ENCODE measurements at regions of chr4 and their contacts with region 1.

Region 1: DNA sequence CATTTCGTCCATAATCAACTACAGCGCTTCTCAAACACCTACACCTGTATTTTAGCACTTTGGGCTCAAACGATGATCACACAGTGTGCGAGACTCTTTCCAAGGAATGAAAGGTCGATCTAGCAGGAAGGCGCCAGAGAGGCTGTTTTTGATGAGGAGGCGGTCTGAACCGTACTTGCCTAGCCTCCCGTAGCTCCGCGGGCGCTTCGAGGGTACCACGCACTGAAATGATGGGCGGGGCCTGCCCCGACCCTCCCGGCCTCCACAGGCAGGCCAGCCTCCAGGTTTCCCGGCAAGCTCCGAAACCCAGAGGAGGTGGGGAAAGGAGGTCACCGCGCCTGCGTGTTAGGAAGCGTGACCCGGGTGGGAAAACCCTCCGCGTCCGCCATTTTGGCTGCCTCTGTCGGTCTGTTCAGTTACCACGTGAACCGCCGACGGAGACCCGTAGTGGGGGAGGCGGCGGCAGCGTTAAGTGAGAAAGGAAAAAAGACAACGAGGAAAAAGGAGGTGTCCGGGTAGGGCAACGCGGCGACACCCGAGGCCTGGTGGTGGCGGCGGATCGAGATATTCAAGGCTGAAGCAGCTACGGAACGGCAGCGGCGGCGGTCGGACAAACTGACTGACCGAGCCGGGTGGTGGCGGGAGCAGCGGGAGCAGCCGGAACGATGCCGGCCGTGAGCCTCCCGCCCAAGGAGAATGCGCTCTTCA is at the start of gene NAA15:
- DNase-seq: peak; percentile 97 to 99 (median 97)
- H3K4me3 ChIP-seq: peak within 1 kb of the TSS; percentile 69 to 94
- H3K4me3 Mint-ChIP-seq: peak within 1 kb of the TSS; percentile 96 to 100 (median 99)
- H3K27ac ChIP-seq: peak within 1 kb of the TSS; percentile 98
- H3K27ac Mint-ChIP-seq: peak within 1 kb of the TSS; percentile 94 to 100 (median 99)
- H3K4me1 ChIP-seq: peaks cover 56% of the 10 kb centered on the region
- H3K4me1 Mint-ChIP-seq: peaks cover 22 to 73% (median 43%) of the 10 kb centered on the region in 4 donors
- H3K27me3 ChIP-seq: no peaks in the 10 kb centered on the region
- H3K27me3 Mint-ChIP-seq: no peaks in the 10 kb centered on the region
- total RNA-seq, gene NAA15: 45.8 to 46.5 TPM

Region 2: DNA sequence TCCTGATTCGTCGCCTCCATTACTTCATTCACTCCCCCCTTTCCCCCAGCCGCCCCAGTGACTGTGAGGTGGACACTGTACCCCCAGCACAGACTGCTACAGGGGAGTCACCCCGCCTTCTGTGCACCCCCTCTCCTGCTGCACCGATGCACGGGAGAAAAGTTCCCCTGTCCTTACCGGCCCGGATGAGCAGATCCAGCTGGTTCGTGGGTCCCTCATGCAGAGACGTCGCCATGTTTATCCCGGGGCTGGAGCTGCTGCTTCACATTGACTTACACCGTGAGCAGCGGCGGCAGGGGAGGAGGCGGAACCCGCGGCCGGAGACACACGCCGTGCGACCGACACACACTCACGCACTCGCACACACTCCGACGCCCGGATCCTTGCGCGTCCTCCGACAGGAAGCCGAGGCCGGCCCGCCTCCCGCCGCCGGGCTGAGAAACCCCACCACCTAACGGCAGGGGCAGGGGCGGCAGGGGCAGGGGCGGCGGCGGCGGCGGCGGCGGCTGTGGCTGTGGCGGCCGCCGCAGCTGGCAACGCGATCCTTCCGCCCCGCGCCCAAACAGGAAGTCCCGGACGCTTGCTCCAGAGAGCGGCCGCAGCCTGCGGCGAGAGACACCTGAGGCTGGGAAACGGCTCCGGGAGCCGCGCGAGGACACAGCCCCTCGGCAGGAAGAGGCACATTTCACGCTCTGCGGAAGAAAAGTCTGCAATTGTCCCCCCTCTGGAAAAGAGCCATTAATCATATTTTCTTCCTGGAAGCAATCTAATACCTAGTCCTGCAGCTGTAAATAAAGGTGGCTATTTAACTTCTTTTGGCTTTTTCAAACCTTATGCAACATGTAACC is 217.1 kb before region 1 on chr4:
- CTCF ChIA-PET with region 1: interaction called, 8 read pairs
- POLR2A ChIA-PET with region 1: interaction called, 50 read pairs
- intact Hi-C with region 1: loop called (anchors 1 kb)
- DNase-seq: peak; percentile 84 to 89 (median 85)
- H3K4me3 ChIP-seq: peak overlapping the region; percentile 73 to 99
- H3K4me3 Mint-ChIP-seq: peak overlapping the region; percentile 89 to 100 (median 92)
- H3K27ac ChIP-seq: peak overlapping the region; percentile 96
- H3K27ac Mint-ChIP-seq: peak overlapping the region; percentile 91 to 97 (median 94)
- H3K4me1 ChIP-seq: peaks cover 37% of the 10 kb centered on the region
- H3K4me1 Mint-ChIP-seq: peaks cover 26 to 52% (median 36%) of the 10 kb centered on the region in 4 donors
- H3K27me3 ChIP-seq: no peaks in the 10 kb centered on the region
- H3K27me3 Mint-ChIP-seq: no peaks in the 10 kb centered on the region

Region 3: DNA sequence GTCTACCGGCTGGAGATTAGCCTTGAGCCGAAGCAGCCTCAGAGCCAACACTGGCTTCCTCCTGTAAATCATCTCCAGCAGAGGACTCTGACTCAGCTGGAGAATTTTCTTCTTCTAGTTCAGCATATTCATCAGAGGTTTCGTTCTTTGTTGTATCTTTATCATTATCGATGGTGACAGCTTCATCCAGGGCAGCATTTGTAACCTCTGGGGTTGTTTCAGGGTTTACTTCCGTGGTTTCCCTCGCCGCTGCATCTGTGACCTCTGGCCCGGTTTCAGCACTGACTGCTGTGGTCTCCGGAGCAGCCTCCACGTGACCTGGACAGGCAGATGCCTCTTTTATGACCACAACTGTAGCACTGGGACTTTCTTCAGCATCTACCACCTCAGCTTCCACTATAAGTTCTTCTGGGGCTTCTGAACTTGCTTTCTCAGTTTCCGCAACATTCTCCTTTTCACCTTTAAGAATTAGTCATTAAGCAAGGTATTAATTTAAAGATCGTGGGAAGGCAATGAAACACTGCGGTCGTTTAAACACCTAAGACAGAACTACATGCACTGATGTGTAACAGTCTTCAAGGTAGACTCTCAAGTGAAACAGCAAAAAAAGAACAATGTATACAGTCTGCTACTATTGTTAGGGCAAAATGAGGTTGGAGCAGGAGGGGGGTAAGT is 34.5 kb before region 1 on chr4:
- CTCF ChIA-PET with region 1: interaction called, 30 read pairs
- POLR2A ChIA-PET with region 1: interaction called, 17 read pairs
- intact Hi-C with region 1: no loop called
- DNase-seq: peak; percentile 61 to 86 (median 73)
- H3K4me3 ChIP-seq: peak overlapping the region; percentile 34 to 38
- H3K4me3 Mint-ChIP-seq: peak overlapping the region; percentile 79 to 91 (median 86)
- H3K27ac ChIP-seq: peak overlapping the region; percentile 47
- H3K27ac Mint-ChIP-seq: peak overlapping the region; percentile 74 to 94 (median 87)
- H3K4me1 ChIP-seq: peaks cover 19% of the 10 kb centered on the region
- H3K4me1 Mint-ChIP-seq: peaks cover 12 to 17% (median 15%) of the 10 kb centered on the region in 4 donors
- H3K27me3 ChIP-seq: no peaks in the 10 kb centered on the region
- H3K27me3 Mint-ChIP-seq: peaks cover 0 to 2% of the 10 kb centered on the region in 2 donors

Region 4: DNA sequence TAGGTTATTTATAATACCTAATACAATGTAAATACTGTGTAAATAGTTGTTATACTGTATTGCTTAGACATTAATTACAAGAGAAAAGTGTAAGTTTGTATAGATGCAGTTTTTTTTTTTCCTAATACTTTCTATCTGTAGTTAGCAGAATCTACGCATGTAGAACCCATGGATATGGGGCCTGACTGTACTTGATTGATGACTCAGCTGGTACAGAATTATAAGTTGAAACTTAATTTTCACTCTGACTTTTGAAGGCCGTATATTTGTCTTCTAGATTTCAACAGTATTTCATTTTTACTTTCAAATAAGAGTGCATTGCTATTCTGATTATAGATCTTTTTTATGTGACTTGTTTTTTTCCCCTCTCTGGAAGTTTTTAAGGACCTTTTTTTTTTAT is 31.8 kb after region 1 on chr4:
- CTCF ChIA-PET with region 1: interaction called, 6 read pairs
- POLR2A ChIA-PET with region 1: interaction called, 4 read pairs
- intact Hi-C with region 1: loop called (anchors 2 kb)
- DNase-seq: no peak
- H3K4me3 ChIP-seq: no peak overlapping the region
- H3K4me3 Mint-ChIP-seq: no peak overlapping the region
- H3K27ac ChIP-seq: no peak overlapping the region
- H3K27ac Mint-ChIP-seq: peak overlapping the region in 1 of 7 donors; percentile 86
- H3K4me1 ChIP-seq: peaks cover 15% of the 10 kb centered on the region
- H3K4me1 Mint-ChIP-seq: peaks cover 16 to 37% (median 23%) of the 10 kb centered on the region in 4 donors
- H3K27me3 ChIP-seq: no peaks in the 10 kb centered on the region
- H3K27me3 Mint-ChIP-seq: no peaks in the 10 kb centered on the region

Measured in CD4-positive, alpha-beta memory T cell (primary cell).